Mammary epithelial cell (primary cell): ENCODE measurements at regions of chr17 and their contacts with region 1.

Region 1: GRCh38 chr17:5610956-5611355 is 26.6 kb upstream of the NLRP1 start:
- DNase-seq: no peak
- H3K4me3 ChIP-seq: no peak overlapping the region
- H3K27ac ChIP-seq: no peak overlapping the region
- H3K4me1 ChIP-seq: no peaks in the 10 kb centered on the region
- H3K27me3 ChIP-seq: no peaks in the 10 kb centered on the region
- CTCF ChIP-seq: no peak

Region 2: DNA sequence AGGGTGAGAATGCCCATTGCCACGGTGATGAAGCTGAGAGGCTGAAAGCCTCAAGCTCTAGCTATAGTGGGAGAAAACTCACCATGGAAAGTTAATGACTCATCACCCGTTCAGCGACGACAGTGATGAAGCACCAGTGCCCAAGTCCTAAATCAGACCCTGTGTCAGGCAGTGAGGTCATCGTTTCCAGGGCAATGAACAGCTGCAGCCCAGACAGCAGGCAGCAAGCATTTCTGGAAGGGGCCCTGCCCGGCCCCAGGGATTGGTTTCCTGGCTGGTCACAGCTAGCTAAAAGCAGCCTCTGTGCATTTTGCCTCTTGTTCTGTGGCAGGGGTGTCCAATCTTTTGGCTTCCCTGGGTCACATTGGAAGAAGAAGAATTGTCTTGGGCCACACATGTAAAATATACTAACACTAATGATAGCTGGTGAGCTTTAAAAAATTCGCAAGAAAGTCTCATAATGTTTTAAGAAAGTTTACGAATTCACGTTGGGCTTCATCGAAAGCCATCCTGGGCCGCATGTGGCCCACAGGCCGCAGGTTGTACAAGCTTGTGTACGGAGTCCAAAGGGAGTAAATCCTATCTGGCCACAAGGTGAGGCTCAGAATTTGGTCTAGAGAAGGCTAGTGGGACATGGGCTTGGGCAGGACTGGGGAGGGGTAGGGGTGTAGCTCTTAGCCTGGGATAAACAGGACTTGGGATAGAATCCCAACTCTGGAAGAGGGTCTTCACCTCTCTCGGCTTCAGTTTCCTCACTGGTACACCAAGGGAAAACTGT is 83.9 kb before region 1 on chr17:
- CTCF ChIA-PET with region 1: no interaction called
- dilution Hi-C with region 1: no loop called
- in situ Hi-C with region 1: no loop called
- intact Hi-C with region 1: no loop called
- DNase-seq: peak; percentile 89
- H3K4me3 ChIP-seq: no peak overlapping the region
- H3K27ac ChIP-seq: peak overlapping the region; percentile 41
- H3K4me1 ChIP-seq: peaks cover 11% of the 10 kb centered on the region
- H3K27me3 ChIP-seq: no peaks in the 10 kb centered on the region
- CTCF ChIP-seq: no peak

Region 3: GRCh38 chr17:5557485-5557884 is 53.5 kb before region 1 on chr17:
- CTCF ChIA-PET with region 1: no interaction called
- dilution Hi-C with region 1: no loop called
- in situ Hi-C with region 1: no loop called
- intact Hi-C with region 1: no loop called
- DNase-seq: peak; percentile 69
- H3K4me3 ChIP-seq: no peak overlapping the region
- H3K27ac ChIP-seq: peak overlapping the region; percentile 46
- H3K4me1 ChIP-seq: peaks cover 15% of the 10 kb centered on the region
- H3K27me3 ChIP-seq: no peaks in the 10 kb centered on the region
- CTCF ChIP-seq: no peak

Region 4: DNA sequence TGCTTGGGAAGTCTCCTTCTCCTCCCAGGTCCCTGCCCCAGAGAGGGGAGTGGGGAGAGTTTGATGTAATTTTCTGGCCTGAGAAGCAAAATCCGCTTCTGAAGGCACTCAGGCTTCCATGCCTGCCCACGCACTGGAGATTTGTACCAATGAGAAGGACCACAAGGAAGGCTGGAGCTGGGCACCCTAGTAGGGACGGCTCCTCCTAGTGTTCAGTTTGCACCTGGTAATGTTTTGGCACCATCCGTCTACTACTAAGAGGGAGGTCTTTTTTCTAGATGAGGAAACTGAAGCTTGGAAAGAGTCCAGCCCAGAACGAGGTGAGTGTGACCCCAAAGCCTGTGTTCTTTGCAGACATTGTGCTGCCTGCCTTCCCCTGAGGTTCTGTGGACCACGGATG is 56.9 kb after region 1 on chr17:
- CTCF ChIA-PET with region 1: no interaction called
- dilution Hi-C with region 1: loop called (anchors 5 kb)
- in situ Hi-C with region 1: no loop called
- intact Hi-C with region 1: no loop called
- DNase-seq: no peak
- H3K4me3 ChIP-seq: no peak overlapping the region
- H3K27ac ChIP-seq: no peak overlapping the region
- H3K4me1 ChIP-seq: no peaks in the 10 kb centered on the region
- H3K27me3 ChIP-seq: peaks cover 2% of the 10 kb centered on the region
- CTCF ChIP-seq: peak in 1 of 2 donors; percentile 33